ENCODE measurements at regions of chr5 and their contacts with region 1.

Region 1: GRCh38 chr5:86968301-86968753 is 299.4 kb upstream of the RASA1 start:
- DNase-seq: no peak
- H3K4me3 Mint-ChIP-seq: no peak overlapping the region
- H3K27ac Mint-ChIP-seq: no peak overlapping the region
- H3K4me1 Mint-ChIP-seq: peaks cover 8% of the 10 kb centered on the region
- H3K27me3 Mint-ChIP-seq: peaks cover 5% of the 10 kb centered on the region

Region 2: DNA sequence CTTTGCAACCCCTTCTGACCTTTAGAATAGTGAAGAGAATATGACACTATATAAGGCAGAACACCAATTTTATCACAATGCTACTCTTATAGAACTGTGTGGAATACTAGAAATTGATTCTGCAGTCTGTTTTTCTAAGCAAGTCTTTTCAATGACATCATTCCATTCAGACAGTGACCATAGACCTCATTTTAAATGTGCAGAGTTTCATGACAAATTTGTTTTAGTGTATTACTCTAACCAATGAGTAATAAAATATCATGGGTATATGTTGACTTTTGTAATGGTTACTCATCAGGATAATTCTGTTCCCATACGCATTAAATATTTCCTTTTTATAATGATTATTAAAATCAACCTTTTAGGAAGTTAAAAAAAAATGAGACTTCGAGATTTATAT is 130.7 kb before region 1 on chr5:
- CTCF ChIA-PET with region 1: no interaction called
- POLR2A ChIA-PET with region 1: no interaction called
- intact Hi-C with region 1: no loop called
- DNase-seq: no peak
- H3K4me3 Mint-ChIP-seq: no peak overlapping the region
- H3K27ac Mint-ChIP-seq: no peak overlapping the region
- H3K4me1 Mint-ChIP-seq: no peaks in the 10 kb centered on the region
- H3K27me3 Mint-ChIP-seq: no peaks in the 10 kb centered on the region

Region 3: DNA sequence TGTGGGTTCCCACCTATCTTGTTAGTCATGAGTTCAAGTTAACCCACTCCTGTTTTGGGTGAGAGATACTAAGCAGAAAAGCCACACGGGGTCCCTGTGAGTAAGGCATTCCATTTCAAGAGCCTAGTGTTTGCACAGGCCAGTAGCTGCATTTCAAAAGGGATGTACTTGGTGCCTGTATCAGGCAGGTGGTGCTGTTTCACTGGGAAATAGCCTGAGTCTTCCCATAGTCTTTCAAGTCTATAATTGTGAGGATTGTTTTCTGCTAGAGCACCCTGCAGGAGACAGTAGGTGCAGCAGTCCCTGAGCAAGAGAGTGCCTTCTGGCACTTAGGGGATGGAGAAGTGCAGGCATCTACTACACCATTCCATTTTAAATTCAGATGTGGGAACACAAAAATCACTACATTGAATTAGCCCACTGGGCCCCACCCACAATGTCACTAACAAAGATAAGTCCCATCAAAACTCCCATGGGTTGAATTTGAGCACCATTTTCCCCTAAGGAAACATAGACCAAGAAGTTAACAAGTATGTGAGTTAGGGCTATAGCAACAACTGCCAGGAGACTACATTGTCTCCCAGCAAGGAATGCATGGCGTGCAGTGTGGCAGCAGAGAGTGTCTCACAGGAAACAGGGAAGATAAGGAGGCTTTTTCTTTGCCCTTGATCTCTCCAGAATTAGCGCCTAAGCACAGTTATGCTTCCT is 87.4 kb before region 1 on chr5:
- CTCF ChIA-PET with region 1: interaction called, 94 read pairs
- POLR2A ChIA-PET with region 1: no interaction called
- intact Hi-C with region 1: loop called (anchors 1 kb)
- DNase-seq: peak; percentile 57
- H3K4me3 Mint-ChIP-seq: no peak overlapping the region
- H3K27ac Mint-ChIP-seq: no peak overlapping the region
- H3K4me1 Mint-ChIP-seq: no peaks in the 10 kb centered on the region
- H3K27me3 Mint-ChIP-seq: peaks cover 4% of the 10 kb centered on the region

Region 4: DNA sequence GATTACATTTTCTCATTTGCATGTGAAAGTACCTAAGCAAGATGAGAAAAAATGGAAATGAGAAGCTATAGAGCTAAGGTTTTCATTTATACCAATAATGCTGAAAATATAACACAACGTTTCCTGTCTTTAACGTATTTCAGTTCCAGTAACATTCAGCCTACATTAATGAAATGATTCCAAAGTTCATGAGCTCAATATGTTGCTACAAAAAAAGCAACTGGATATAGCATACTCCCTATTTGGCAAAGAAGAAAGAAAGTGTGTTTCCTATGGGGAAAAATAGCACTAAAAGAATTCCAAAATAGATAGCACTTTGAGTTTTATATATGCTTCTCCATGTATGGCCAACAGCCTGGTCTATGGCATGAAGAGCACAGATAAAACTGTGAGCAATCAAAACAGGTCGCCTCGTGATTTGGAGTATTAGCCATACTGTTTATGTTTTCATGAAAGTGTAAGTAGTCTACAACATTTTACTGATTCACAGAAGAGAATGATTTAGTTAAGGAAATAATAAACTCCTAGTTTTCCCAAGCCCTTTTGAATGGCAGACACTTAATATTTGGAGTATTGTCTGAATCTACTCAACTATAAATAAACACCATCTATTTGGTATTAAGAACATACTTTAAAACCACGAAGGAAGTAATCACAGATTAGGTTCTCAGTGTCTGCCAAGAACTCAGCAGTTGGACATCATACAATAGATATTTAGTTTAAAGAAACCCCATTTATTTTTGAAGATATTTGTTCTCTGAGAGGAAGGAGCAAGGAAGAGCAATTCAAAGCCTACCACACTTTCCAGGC is 40.6 kb after region 1 on chr5:
- CTCF ChIA-PET with region 1: interaction called, 12 read pairs
- POLR2A ChIA-PET with region 1: no interaction called
- intact Hi-C with region 1: loop called (anchors 2 kb)
- DNase-seq: no peak
- H3K4me3 Mint-ChIP-seq: no peak overlapping the region
- H3K27ac Mint-ChIP-seq: no peak overlapping the region
- H3K4me1 Mint-ChIP-seq: no peaks in the 10 kb centered on the region
- H3K27me3 Mint-ChIP-seq: no peaks in the 10 kb centered on the region

Region 5: GRCh38 chr5:87300744-87301143 is 332.4 kb after region 1 on chr5:
- CTCF ChIA-PET with region 1: no interaction called
- POLR2A ChIA-PET with region 1: no interaction called
- intact Hi-C with region 1: no loop called
- DNase-seq: peak; percentile 70
- H3K4me3 Mint-ChIP-seq: no peak overlapping the region
- H3K27ac Mint-ChIP-seq: no peak overlapping the region
- H3K4me1 Mint-ChIP-seq: peaks cover 65% of the 10 kb centered on the region
- H3K27me3 Mint-ChIP-seq: no peaks in the 10 kb centered on the region